CD14-positive monocyte (primary cell): ENCODE measurements at regions of chr16 and their contacts with region 1.

Region 1: DNA sequence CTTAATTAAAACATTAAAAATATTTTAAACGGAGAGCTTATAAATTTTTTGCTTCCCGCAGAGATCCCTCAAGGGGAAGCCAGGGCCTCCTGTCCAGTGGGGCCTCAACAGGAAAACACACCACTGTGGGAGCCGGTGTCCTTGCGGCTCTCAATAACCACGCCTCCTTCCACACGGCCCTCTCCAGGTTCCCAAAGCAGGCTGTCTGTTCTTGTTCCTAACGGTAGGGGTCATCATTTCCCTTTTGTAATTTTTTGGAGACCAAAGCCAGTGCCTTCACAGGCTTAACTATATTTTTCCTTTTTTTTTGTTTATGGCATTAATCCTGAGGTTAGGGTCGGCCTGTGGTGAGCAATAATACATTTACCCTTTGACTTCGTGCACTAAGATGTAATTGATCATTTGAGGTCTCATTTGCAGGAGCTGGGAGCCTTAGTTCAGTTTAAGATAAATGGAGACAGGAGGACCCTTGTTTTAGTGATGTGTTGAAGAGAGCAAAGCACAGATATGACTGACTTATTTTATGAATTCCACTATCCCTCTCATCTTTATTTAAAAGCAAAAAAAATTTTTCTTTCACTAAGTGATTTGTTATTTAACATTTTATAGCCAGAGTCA is 77.5 kb upstream of the N4BP1 start:
- DNase-seq: peak; percentile 1 to 9 (median 8)
- H3K4me3 ChIP-seq: no peak overlapping the region
- H3K4me3 Mint-ChIP-seq: no peak overlapping the region
- H3K27ac ChIP-seq: no peak overlapping the region
- H3K27ac Mint-ChIP-seq: no peak overlapping the region
- H3K4me1 ChIP-seq: peaks cover 5 to 7% of the 10 kb centered on the region in 2 donors
- H3K4me1 Mint-ChIP-seq: peaks cover 7% of the 10 kb centered on the region
- H3K27me3 ChIP-seq: no peaks in the 10 kb centered on the region
- H3K27me3 Mint-ChIP-seq: peaks cover 2 to 12% (median 9%) of the 10 kb centered on the region in 3 donors
- CTCF ChIP-seq: peak; percentile 75

Region 2: DNA sequence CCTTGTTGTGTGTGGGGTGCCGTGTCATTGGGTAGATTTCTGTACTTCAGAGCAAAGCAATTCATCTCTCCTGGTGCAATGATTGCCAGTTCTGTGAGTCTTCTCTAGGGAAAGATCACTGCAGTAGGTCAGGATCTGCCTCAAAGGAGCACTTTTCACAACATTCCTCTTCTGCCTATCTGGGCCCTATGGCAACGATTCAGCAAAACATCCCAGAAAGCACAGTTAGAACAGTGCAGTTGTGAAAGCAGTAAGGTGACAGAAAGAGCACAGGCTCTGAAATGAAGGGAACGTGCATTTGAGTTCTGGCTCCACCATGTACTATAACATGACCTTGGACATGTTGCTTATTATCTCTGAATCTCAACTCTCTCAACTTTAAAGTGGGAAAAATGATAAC is 100.9 kb after region 1 on chr16:
- intact Hi-C with region 1: no loop called
- DNase-seq: no peak
- H3K4me3 ChIP-seq: no peak overlapping the region
- H3K4me3 Mint-ChIP-seq: no peak overlapping the region
- H3K27ac ChIP-seq: no peak overlapping the region
- H3K27ac Mint-ChIP-seq: no peak overlapping the region
- H3K4me1 ChIP-seq: no peaks in the 10 kb centered on the region
- H3K4me1 Mint-ChIP-seq: no peaks in the 10 kb centered on the region
- H3K27me3 ChIP-seq: no peaks in the 10 kb centered on the region
- H3K27me3 Mint-ChIP-seq: peaks cover 0 to 1% (median 0%) of the 10 kb centered on the region in 3 donors
- CTCF ChIP-seq: no peak

Region 3: DNA sequence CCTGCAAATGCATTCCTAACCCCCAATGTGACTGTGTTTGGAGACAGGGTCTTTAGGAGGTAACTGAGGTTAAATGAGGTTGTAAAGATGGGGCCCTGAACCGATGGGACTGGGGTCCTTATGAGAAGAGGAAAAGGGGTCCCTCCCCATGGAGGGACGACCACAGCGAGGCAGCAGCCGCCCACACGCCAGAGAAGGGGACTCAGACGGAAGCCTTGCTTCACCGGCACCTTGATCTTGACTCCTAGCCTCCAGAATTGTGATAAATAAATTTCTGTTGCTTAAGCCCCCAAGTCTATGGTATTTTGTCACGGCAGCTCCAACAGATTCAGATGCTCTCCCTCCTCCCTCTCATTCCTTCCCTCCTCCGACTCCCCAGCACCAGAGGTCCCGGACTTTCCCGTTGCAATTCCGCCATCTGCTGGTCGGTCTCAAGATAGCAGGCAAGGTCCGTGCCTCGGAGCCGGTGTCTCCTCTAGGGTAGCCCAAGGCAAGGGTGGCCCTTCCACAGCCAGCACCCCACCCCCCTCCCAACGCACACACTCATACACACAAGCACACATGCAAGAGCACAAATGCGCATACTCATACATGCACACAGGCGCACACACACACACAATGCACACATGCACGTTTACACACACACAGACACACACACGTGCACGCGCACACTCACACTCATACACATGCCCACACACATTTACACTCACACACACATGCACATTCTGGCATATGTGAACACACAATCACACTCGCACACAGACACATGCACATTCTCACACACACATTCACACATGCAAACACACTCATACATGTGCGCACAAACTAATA is 663.0 kb after region 1 on chr16:
- intact Hi-C with region 1: loop called (anchors 2 kb)
- DNase-seq: peak in 2 of 3 donors; percentile 3 to 21
- H3K4me3 ChIP-seq: no peak overlapping the region
- H3K4me3 Mint-ChIP-seq: no peak overlapping the region
- H3K27ac ChIP-seq: no peak overlapping the region
- H3K27ac Mint-ChIP-seq: no peak overlapping the region
- H3K4me1 ChIP-seq: no peaks in the 10 kb centered on the region
- H3K4me1 Mint-ChIP-seq: no peaks in the 10 kb centered on the region
- H3K27me3 ChIP-seq: no peaks in the 10 kb centered on the region
- H3K27me3 Mint-ChIP-seq: peaks cover 6 to 13% (median 11%) of the 10 kb centered on the region in 3 donors
- CTCF ChIP-seq: peak; percentile 80